ENCODE measurements at regions of chr2 and their contacts with region 1.

Region 1: GRCh38 chr2:10408649-10409579 is 39.2 kb downstream of the ODC1 start:
- DNase-seq: peak; percentile 64
- ATAC-seq: peak; percentile 73
- H3K4me3 ChIP-seq: no peak overlapping the region
- H3K27ac ChIP-seq: no peak overlapping the region
- H3K4me1 ChIP-seq: peaks cover 23% of the 10 kb centered on the region
- H3K27me3 ChIP-seq: no peaks in the 10 kb centered on the region
- CTCF ChIP-seq: peak; percentile 94
- POLR2A ChIP-seq: no peak
- RAD21 ChIP-seq: peak; percentile 95

Region 2: DNA sequence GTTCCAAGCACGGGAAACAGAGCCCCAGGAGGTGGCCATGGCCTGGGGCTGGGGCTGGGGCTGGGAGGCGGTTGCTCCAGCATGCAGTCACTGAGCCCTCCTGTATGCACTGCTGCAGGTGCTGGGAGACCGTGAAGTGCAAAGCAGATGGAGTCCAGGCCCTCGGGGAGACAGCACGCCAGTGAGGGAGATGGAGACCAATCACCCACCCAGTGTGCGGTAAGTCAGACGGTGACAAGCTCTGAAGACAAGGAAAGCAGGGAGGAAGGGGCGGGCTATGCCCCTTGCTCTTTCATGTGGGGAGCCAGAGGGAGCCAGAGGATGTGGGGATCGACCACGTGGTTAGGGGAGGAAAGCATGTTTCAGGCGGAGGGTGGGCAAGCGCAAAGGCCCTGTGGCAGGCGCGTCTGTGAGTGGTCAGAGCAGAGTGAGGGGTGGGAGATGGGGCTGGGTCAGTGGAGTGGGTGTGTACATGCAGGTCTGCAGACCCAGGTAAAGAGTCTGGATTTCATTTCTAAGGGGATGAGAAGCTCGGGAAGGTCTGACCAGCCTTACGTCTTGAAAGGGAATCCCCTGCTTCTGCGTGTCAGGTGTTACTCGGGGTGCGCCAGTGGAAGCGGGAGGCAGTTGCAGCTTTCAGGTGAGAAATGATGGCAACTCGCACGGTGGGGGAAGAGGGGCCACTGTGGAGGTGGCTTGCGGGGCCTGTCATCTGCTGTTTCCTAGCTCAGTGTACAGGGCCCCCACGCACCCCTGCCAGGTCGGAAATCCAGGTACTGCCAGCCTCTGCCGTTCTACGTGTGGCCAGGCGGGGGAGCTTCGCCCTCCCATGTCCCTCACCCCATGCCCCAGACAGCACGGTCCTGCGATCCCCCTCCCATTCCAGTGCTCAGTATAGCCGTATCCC is 266.9 kb before region 1 on chr2:
- CTCF ChIA-PET with region 1: interaction called, 4 read pairs
- POLR2A ChIA-PET with region 1: no interaction called
- dilution Hi-C with region 1: no loop called
- in situ Hi-C with region 1: loop called (anchors 10 kb)
- intact Hi-C with region 1: no loop called
- DNase-seq: no peak
- ATAC-seq: peak; percentile 67; the same call in 1 of the 2 replicates
- H3K4me3 ChIP-seq: no peak overlapping the region
- H3K27ac ChIP-seq: no peak overlapping the region
- H3K4me1 ChIP-seq: no peaks in the 10 kb centered on the region; the same call in 1 of the 2 replicates
- H3K27me3 ChIP-seq: no peaks in the 10 kb centered on the region
- CTCF ChIP-seq: peak; percentile 45
- POLR2A ChIP-seq: no peak
- RAD21 ChIP-seq: peak; percentile 53

Region 3: DNA sequence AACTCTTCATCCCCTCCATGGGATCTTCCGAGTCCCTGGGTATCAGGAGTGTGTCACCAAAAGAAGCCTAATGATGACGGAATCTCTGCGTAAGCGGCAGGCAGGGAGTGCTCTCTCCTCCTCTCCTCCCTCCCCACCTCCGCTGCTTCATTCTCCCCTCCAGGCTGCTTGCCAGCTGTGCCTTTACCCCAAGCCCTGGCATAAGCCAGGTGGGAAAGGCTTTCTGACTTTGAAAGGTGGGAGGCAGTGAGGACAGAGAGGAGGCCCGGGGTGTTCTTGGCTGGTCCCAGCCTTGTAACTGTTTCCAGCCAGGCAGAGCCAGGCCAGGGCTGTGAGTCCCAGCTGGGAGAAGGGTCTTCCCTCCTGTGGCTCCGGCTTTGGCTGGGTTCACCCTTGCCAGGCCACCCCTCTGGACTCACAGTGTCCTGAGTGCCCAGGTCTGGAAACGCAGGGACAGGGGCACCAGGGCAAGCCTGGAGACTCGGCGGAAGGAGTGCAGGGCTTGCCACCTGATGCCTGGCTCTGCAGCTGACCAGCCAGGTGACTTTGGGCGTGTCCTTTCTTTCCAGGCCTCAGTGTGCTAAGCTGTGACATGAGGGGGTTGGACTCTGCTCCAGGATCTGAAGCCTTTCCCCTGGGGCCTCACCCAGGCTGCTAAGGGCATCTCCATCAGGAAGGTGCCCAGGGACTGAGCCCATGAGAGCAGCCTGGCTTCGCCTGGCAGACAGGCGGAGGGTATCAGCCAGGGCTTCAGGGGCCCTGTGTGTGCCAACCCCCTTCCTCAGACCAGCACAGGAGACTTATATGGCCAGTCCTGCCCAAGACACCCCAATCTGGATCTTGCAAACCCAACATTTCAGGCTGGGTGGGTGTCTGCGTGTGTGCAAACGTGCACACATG is 139.0 kb before region 1 on chr2:
- CTCF ChIA-PET with region 1: no interaction called
- POLR2A ChIA-PET with region 1: no interaction called
- dilution Hi-C with region 1: no loop called
- in situ Hi-C with region 1: no loop called
- intact Hi-C with region 1: loop called (anchors 1 kb)
- DNase-seq: no peak
- ATAC-seq: no peak
- H3K4me3 ChIP-seq: no peak overlapping the region
- H3K27ac ChIP-seq: no peak overlapping the region
- H3K4me1 ChIP-seq: peaks cover 2% of the 10 kb centered on the region; the same call in 1 of the 2 replicates
- H3K27me3 ChIP-seq: peaks cover 3% of the 10 kb centered on the region
- CTCF ChIP-seq: no peak
- POLR2A ChIP-seq: no peak
- RAD21 ChIP-seq: no peak

Region 4: GRCh38 chr2:10302479-10303180 is 106.3 kb before region 1 on chr2 and contains the start of gene HPCAL1:
- CTCF ChIA-PET with region 1: interaction called, 13 read pairs
- POLR2A ChIA-PET with region 1: no interaction called
- dilution Hi-C with region 1: no loop called
- in situ Hi-C with region 1: no loop called
- intact Hi-C with region 1: loop called (anchors 1 kb)
- DNase-seq: peak; percentile 70
- ATAC-seq: peak; percentile 88
- H3K4me3 ChIP-seq: peak within 1 kb of the TSS; percentile 72
- H3K27ac ChIP-seq: peak within 1 kb of the TSS; percentile 78
- H3K4me1 ChIP-seq: peaks cover 12% of the 10 kb centered on the region; the same call in 1 of the 2 replicates
- H3K27me3 ChIP-seq: no peaks in the 10 kb centered on the region
- CTCF ChIP-seq: peak; percentile 51
- POLR2A ChIP-seq: peak; percentile 56; the same call in 1 of the 2 replicates
- RAD21 ChIP-seq: no peak; the same call in 1 of the 2 replicates
- total RNA-seq, gene HPCAL1: 8.2 and 9.4 TPM in 2 replicates

Region 5: DNA sequence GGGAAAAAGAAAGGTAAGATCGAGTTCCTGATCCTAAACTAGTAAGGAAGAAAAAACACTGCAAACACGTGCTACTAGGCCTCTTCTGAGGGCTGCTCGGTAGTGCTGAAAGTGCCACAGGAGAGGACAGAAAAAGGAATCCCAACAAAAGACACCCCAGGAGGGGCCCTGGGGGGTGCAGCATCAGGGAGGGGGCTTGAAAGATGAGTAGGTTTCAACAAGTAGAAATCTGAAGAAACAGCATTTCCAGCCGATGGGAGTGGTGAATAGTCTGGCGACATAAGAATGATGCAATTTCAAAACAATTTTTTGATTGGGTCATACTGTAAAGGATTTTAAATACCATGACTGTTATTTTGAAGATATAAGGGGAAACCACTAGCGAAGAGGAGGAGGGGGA is 182.3 kb after region 1 on chr2:
- CTCF ChIA-PET with region 1: no interaction called
- POLR2A ChIA-PET with region 1: no interaction called
- dilution Hi-C with region 1: no loop called
- in situ Hi-C with region 1: no loop called
- intact Hi-C with region 1: no loop called
- DNase-seq: peak; percentile 34
- ATAC-seq: peak; percentile 65
- H3K4me3 ChIP-seq: no peak overlapping the region
- H3K27ac ChIP-seq: no peak overlapping the region
- H3K4me1 ChIP-seq: no peaks in the 10 kb centered on the region
- H3K27me3 ChIP-seq: no peaks in the 10 kb centered on the region
- CTCF ChIP-seq: no peak
- POLR2A ChIP-seq: no peak
- RAD21 ChIP-seq: no peak